ENCODE measurements at regions of chr10 and their contacts with region 1.

Region 1: DNA sequence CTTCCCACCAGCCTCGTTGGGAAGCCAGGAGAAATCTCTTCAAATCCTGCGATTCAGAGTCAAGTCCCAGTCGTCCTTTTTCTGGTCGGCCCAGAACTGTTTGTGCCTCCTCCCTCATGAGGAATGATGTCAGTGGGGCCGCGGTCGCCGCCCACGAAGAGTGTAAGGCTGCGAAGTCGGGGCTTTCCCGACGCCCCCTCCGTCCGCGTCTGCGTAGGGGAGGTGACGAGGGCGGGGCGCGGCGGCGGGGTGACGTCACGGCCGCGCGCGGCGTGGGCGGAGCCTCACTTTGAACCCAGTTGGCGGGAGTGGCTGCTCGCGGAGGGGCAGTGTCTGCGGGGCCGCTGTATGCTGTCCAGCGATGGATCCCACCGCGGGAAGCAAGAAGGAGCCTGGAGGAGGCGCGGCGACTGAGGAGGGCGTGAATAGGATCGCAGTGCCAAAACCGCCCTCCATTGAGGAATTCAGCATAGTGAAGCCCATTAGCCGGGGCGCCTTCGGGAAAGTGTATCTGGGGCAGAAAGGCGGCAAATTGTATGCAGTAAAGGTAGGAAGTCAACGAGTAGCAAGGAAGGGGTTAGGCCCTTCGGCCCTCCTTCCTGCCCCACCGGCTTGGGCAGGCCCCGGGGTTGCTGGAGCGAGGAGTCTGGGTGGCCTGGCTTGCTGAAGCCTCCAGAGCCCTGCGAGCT is at the start of gene MASTL:
- DNase-seq: peak; percentile 92 to 93
- ATAC-seq: peak; percentile 96 to 98 (median 97)
- H3K4me3 ChIP-seq: peak within 1 kb of the TSS; percentile 48 to 95 (median 84)
- H3K27ac ChIP-seq: peak within 1 kb of the TSS; percentile 93 to 100 (median 98)
- H3K4me1 ChIP-seq: peaks cover 2 to 50% (median 36%) of the 10 kb centered on the region in 9 donors
- H3K27me3 ChIP-seq: no peaks in the 10 kb centered on the region
- CTCF ChIP-seq: no peak
- total RNA-seq, gene MASTL: 1.6 to 4.3 (median 2.0) TPM

Region 2: GRCh38 chr10:27099916-27100812 is 55.0 kb before region 1 on chr10 and contains the start of gene ANKRD26:
- intact Hi-C with region 1: loop called in 2 of 10 experiments (anchors 5 kb)
- DNase-seq: peak; percentile 97 to 99
- ATAC-seq: peak; percentile 94 to 98 (median 96)
- H3K4me3 ChIP-seq: peak within 1 kb of the TSS; percentile 72 to 87 (median 76)
- H3K27ac ChIP-seq: peak within 1 kb of the TSS; percentile 85 to 96 (median 92)
- H3K4me1 ChIP-seq: peaks cover 3 to 22% (median 15%) of the 10 kb centered on the region in 9 donors
- H3K27me3 ChIP-seq: no peaks in the 10 kb centered on the region
- CTCF ChIP-seq: peak in 3 of 9 donors; percentile 18 to 26 (median 24)
- total RNA-seq, gene ANKRD26: 8.2 to 12.2 (median 10.8) TPM

Region 3: GRCh38 chr10:27241652-27242472 is 86.7 kb after region 1 on chr10:
- intact Hi-C with region 1: loop called in 7 of 10 experiments (anchors 2 to 10 kb)
- DNase-seq: peak; percentile 91 to 93
- ATAC-seq: peak; percentile 90 to 95 (median 92)
- H3K4me3 ChIP-seq: peak overlapping the region; percentile 58 to 84 (median 76)
- H3K27ac ChIP-seq: peak overlapping the region; percentile 92 to 99 (median 96)
- H3K4me1 ChIP-seq: peaks cover 4 to 48% (median 40%) of the 10 kb centered on the region in 9 donors
- H3K27me3 ChIP-seq: no peaks in the 10 kb centered on the region
- CTCF ChIP-seq: peak in 8 of 9 donors; percentile 5 to 52 (median 36)

Region 4: GRCh38 chr10:27536437-27536836 is 381.2 kb after region 1 on chr10:
- intact Hi-C with region 1: no loop called
- DNase-seq: no peak
- ATAC-seq: no peak
- H3K4me3 ChIP-seq: no peak overlapping the region
- H3K27ac ChIP-seq: no peak overlapping the region
- H3K4me1 ChIP-seq: peaks cover 0 to 7% (median 0%) of the 10 kb centered on the region in 9 donors
- H3K27me3 ChIP-seq: no peaks in the 10 kb centered on the region
- CTCF ChIP-seq: no peak

Measured in heart right ventricle (tissue), 16 donors.